Dendritic cell treated with granulocyte-macrophage colony-stimulating factor and Interleukin-4, amounts not matched to agents 40 ng/mL and 50 ng/mL, for 4 days (primary cell): ENCODE measurements at regions of chr9 and their contacts with region 1.

Region 1: GRCh38 chr9:126490871-126491567 is 122.7 kb upstream of the LMX1B start:
- H3K4me3 Mint-ChIP-seq: no peak overlapping the region
- H3K27ac Mint-ChIP-seq: no peak overlapping the region
- H3K4me1 Mint-ChIP-seq: peaks cover 38% of the 10 kb centered on the region
- H3K27me3 Mint-ChIP-seq: peaks cover 4% of the 10 kb centered on the region

Region 2: DNA sequence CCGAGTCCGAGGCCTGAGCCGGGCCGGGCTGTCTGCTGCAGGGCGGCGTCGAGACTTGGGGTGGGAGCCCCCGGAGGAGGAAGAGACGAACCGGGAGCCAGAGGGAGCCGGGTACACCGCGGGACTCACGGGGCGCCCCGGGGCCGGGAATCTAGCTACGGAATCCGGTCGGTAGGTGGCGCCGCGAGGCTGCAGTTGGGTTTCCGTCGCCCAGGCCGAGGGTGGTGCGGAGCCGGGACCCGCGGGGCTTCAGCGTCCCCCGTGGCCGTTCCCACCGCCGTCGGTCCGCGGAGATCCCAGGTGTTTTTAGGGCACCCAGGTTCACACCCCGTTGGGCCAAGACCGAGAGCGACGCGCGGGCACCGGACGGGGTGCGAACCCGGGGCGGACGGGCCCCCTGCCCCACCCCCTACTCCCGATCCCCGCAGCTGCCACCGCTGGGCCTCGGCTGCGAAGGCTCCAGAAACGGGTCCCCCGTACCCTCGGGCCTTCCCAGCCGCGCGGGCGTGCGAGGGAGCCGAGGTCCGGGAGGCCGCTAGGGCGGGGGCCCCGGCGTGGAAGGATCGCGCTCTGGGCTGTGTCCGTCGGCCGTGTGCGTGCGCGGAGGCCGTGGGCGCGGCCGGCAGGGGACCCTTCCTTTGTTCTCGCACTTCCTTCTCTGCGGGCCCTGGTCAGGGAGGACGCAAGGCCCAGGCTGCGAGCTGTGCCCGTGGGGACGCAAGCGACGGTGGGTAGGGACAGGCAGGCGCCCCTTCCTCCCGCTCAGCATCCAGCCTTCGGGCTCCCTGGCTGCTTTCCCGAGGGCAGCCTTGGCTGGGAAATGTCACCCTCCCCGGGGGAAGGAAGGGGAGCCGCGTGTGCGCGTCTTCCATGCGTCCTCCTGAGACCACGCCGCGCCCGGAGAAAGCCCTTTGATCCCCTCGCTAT is 1082.8 kb before region 1 on chr9:
- intact Hi-C with region 1: loop called (anchors 10 kb)
- H3K4me3 Mint-ChIP-seq: peak overlapping the region; percentile 78
- H3K27ac Mint-ChIP-seq: peak overlapping the region; percentile 49
- H3K4me1 Mint-ChIP-seq: peaks cover 31% of the 10 kb centered on the region
- H3K27me3 Mint-ChIP-seq: peaks cover 53% of the 10 kb centered on the region

Region 3: GRCh38 chr9:126301985-126302603 is 188.9 kb before region 1 on chr9:
- intact Hi-C with region 1: loop called (anchors 5 kb)
- H3K4me3 Mint-ChIP-seq: no peak overlapping the region
- H3K27ac Mint-ChIP-seq: no peak overlapping the region
- H3K4me1 Mint-ChIP-seq: peaks cover 5% of the 10 kb centered on the region
- H3K27me3 Mint-ChIP-seq: peaks cover 5% of the 10 kb centered on the region

Region 4: DNA sequence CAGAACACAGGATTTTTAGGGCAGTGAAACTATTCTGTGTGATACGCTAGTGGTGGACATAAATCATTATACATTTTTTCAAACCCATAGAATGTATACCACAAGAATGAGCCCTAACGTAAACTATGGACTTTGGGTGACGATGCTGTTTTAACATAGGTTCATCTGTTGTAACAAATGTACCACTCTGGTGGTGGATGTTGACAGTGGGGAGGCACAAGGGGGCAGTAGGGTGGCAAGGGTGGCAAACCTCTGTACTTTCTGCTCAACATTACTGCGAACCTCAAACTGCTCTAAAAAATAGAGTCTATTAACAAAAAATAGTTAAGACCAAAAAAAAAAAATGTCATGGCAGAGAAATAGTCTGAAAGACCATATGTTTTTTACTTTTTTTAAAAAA is 173.5 kb before region 1 on chr9:
- intact Hi-C with region 1: loop called (anchors 2 kb)
- H3K4me3 Mint-ChIP-seq: no peak overlapping the region
- H3K27ac Mint-ChIP-seq: no peak overlapping the region
- H3K4me1 Mint-ChIP-seq: no peaks in the 10 kb centered on the region
- H3K27me3 Mint-ChIP-seq: no peaks in the 10 kb centered on the region

Region 5: DNA sequence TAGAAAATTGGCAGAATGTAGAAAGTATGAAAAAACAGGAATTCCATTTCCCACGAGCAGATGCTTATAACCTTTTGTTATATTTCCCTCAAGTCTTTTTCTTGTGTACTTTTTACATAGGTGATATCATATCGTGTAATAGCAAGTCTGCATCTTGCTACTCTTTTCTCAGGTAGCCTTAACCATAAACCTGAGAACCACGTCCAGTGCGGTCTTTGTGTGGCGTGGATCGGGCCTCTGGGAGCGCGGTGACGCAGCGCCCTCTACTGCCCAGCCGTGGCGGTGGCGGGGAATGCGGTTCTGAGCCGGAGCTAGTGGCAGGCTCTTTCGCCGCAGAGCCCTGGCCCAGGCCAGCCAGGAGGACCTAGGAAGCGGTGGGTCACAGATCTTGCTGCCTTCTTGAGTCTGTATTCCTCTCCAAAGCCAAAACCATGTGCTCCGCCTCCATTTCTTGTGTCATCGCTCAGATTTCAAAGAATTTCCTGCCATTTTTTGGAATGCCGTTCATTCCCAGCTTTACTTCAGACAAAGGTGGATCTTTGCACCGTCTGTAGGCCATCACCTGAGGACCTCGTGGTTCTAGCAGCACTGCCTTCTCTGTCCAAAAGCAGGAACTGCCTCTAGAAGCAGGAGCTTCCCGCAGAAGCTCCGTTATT is 92.5 kb before region 1 on chr9:
- intact Hi-C with region 1: loop called (anchors 2 kb)
- H3K4me3 Mint-ChIP-seq: no peak overlapping the region
- H3K27ac Mint-ChIP-seq: no peak overlapping the region
- H3K4me1 Mint-ChIP-seq: peaks cover 75% of the 10 kb centered on the region
- H3K27me3 Mint-ChIP-seq: no peaks in the 10 kb centered on the region

Region 6: GRCh38 chr9:126704873-126705766 is 214.1 kb after region 1 on chr9:
- intact Hi-C with region 1: no loop called
- H3K4me3 Mint-ChIP-seq: peak overlapping the region; percentile 65
- H3K27ac Mint-ChIP-seq: peak overlapping the region; percentile 75
- H3K4me1 Mint-ChIP-seq: peaks cover 39% of the 10 kb centered on the region
- H3K27me3 Mint-ChIP-seq: peaks cover 64% of the 10 kb centered on the region